ENCODE measurements at regions of chr9 and their contacts with region 1.

Region 1: GRCh38 chr9:70111042-70111602 is 67.5 kb downstream of the MAMDC2 start:
- DNase-seq: peak; percentile 64 to 89
- H3K4me3 ChIP-seq: no peak overlapping the region
- H3K27ac ChIP-seq: no peak overlapping the region
- H3K4me1 ChIP-seq: peaks cover 0 to 7% (median 5%) of the 10 kb centered on the region in 4 experiments; a peak in 4 of 7 replicates
- H3K27me3 ChIP-seq: no peaks in the 10 kb centered on the region
- CTCF ChIP-seq: peak; percentile 83 to 92 (median 88)
- EP300 ChIP-seq: no peak; a peak in 1 of 3 replicates
- POLR2A ChIP-seq: no peak
- RAD21 ChIP-seq: peak; percentile 84 to 88

Region 2: GRCh38 chr9:69885474-69885929 is 225.6 kb before region 1 on chr9:
- CTCF ChIA-PET with region 1: no interaction called
- POLR2A ChIA-PET with region 1: no interaction called
- DNase-seq: no peak
- H3K4me3 ChIP-seq: no peak overlapping the region
- H3K27ac ChIP-seq: no peak overlapping the region
- H3K4me1 ChIP-seq: no peaks in the 10 kb centered on the region
- H3K27me3 ChIP-seq: no peaks in the 10 kb centered on the region
- CTCF ChIP-seq: no peak
- EP300 ChIP-seq: no peak
- POLR2A ChIP-seq: no peak
- RAD21 ChIP-seq: no peak

Region 3: GRCh38 chr9:69961830-69962229 is 149.3 kb before region 1 on chr9:
- CTCF ChIA-PET with region 1: interaction called, 42 read pairs
- POLR2A ChIA-PET with region 1: no interaction called
- DNase-seq: no peak
- H3K4me3 ChIP-seq: no peak overlapping the region
- H3K27ac ChIP-seq: no peak overlapping the region
- H3K4me1 ChIP-seq: peaks cover 5 to 25% (median 19%) of the 10 kb centered on the region in 4 experiments; a peak in 5 of 7 replicates
- H3K27me3 ChIP-seq: no peaks in the 10 kb centered on the region
- CTCF ChIP-seq: no peak
- EP300 ChIP-seq: no peak
- POLR2A ChIP-seq: no peak
- RAD21 ChIP-seq: no peak

Region 4: DNA sequence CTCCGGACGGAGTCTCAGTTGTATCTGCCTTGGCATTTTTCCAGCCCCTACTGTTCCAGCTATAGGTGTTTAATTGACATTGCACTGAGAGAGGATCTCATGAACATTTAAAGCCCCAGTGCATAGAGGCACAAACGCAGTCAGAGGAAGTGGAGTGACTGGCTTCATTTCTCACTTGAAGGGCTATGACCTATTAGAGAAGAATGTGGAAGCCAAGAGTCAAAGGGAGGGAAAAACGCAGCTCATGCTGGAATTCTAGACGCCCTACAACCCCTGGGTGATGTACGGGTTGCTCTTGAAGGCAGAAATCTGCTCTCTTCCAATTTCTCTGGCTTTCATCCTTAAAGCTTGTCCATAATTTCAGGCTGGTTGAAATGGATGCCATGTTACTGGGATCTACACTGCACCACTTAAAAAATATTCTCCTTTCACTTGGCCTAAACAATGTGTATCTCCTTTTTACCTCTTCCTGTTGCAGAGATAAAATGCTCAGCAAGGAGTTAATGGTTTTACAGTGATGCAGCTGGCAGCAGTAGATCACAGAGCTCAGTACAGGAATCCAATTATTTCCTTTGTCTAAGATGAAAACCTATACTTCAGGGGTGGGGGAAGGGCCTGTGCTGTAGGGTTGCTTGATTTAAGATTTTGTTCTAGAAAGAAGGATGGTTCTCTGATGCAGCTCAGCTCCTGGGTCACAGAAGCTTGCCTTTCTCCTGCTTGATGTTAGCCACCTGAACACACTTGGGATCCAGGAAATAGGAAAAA is 129.3 kb before region 1 on chr9:
- CTCF ChIA-PET with region 1: interaction called, 63 read pairs
- POLR2A ChIA-PET with region 1: no interaction called
- DNase-seq: no peak
- H3K4me3 ChIP-seq: no peak overlapping the region
- H3K27ac ChIP-seq: no peak overlapping the region
- H3K4me1 ChIP-seq: peaks cover 0 to 3% (median 0%) of the 10 kb centered on the region in 4 experiments; a peak in 1 of 7 replicates
- H3K27me3 ChIP-seq: no peaks in the 10 kb centered on the region
- CTCF ChIP-seq: no peak
- EP300 ChIP-seq: no peak
- POLR2A ChIP-seq: no peak
- RAD21 ChIP-seq: no peak

Region 5: DNA sequence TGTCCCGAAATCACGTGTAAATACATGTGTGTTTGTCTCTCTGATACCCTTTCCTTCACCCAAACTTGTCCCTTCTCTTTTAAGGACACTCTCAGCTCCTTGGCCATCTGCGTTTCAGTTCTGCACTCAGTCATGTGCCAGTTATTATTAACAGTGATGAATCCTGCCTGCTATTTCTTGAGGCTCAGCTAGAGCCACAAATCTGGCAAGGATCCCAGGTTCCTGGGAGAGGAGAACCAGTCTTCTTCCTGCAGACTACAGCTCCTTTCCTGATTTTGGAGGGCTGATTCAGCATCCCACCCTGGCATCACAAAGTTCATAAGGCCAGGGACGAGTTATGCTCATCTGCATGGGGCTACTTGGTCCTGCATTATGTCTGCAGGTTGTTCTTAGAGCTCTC is 61.9 kb before region 1 on chr9:
- CTCF ChIA-PET with region 1: interaction called, 42 read pairs
- POLR2A ChIA-PET with region 1: interaction called, 9 read pairs
- DNase-seq: peak in 1 of 2 experiments; percentile 11
- H3K4me3 ChIP-seq: no peak overlapping the region
- H3K27ac ChIP-seq: no peak overlapping the region
- H3K4me1 ChIP-seq: peaks cover 4 to 8% (median 6%) of the 10 kb centered on the region in 4 experiments
- H3K27me3 ChIP-seq: no peaks in the 10 kb centered on the region
- CTCF ChIP-seq: no peak
- EP300 ChIP-seq: no peak
- POLR2A ChIP-seq: no peak
- RAD21 ChIP-seq: no peak

Region 6: DNA sequence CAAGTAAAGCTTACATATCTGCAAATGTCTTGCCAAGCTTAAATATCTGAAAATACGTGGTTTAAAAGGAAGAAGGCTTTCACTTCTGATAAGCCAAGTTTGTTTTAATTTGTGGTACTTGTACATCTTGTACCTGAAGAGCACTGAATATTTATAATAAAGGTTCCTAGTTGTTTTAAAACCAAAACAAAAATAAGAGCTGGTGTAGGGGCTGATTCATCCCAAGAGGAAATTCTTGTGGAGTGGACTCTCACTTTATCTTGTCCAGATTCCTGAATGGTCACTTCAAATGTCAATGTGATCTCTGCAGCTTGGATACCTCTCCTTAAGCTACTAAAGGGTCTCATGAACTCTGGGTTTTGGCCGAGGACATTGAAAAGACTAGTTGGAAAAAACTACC is 37.9 kb before region 1 on chr9:
- CTCF ChIA-PET with region 1: interaction called, 36 read pairs
- POLR2A ChIA-PET with region 1: no interaction called
- DNase-seq: no peak
- H3K4me3 ChIP-seq: no peak overlapping the region
- H3K27ac ChIP-seq: no peak overlapping the region
- H3K4me1 ChIP-seq: no peaks in the 10 kb centered on the region; a peak in 2 of 7 replicates
- H3K27me3 ChIP-seq: no peaks in the 10 kb centered on the region
- CTCF ChIP-seq: no peak
- EP300 ChIP-seq: no peak
- POLR2A ChIP-seq: no peak
- RAD21 ChIP-seq: no peak

Region 7: GRCh38 chr9:70093944-70094343 is 17.2 kb before region 1 on chr9:
- CTCF ChIA-PET with region 1: interaction called, 64 read pairs
- POLR2A ChIA-PET with region 1: no interaction called
- DNase-seq: no peak
- H3K4me3 ChIP-seq: no peak overlapping the region
- H3K27ac ChIP-seq: no peak overlapping the region
- H3K4me1 ChIP-seq: no peaks in the 10 kb centered on the region; a peak in 1 of 7 replicates
- H3K27me3 ChIP-seq: no peaks in the 10 kb centered on the region
- CTCF ChIP-seq: no peak
- EP300 ChIP-seq: no peak
- POLR2A ChIP-seq: no peak
- RAD21 ChIP-seq: no peak

Region 8: DNA sequence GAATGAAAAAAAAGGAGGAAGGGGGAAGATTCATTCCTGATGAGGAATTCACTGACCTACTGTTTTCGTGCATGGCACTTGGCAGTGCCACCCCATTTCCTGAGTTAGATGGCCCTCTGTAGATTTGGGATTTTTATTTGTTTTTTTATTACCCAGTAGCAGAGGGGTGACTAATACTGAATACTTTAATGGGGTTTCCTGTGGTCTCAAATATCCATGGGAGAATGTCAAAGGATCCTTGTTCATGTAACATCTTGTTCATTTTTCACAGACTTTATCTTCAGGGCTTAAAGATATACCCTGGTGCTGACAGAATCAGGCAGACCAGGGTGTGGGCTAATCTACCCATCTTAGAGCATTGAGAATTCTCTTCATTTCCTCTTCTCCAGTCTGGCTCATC is 25.5 kb after region 1 on chr9:
- CTCF ChIA-PET with region 1: interaction called, 32 read pairs
- POLR2A ChIA-PET with region 1: no interaction called
- DNase-seq: no peak
- H3K4me3 ChIP-seq: no peak overlapping the region
- H3K27ac ChIP-seq: no peak overlapping the region
- H3K4me1 ChIP-seq: no peaks in the 10 kb centered on the region
- H3K27me3 ChIP-seq: no peaks in the 10 kb centered on the region
- CTCF ChIP-seq: no peak
- EP300 ChIP-seq: no peak
- POLR2A ChIP-seq: no peak
- RAD21 ChIP-seq: no peak

Measured in H1 (cell line).